Pancreas (tissue), 10 donors: ENCODE measurements at regions of chr1 and their contacts with region 1.

Region 1: GRCh38 chr1:101130673-101131072 is 105.1 kb upstream of the DPH5 start:
- DNase-seq: no peak
- ATAC-seq: no peak
- H3K4me3 ChIP-seq: no peak overlapping the region
- H3K27ac ChIP-seq: no peak overlapping the region
- H3K4me1 ChIP-seq: no peaks in the 10 kb centered on the region
- H3K27me3 ChIP-seq: no peaks in the 10 kb centered on the region
- CTCF ChIP-seq: no peak

Region 2: DNA sequence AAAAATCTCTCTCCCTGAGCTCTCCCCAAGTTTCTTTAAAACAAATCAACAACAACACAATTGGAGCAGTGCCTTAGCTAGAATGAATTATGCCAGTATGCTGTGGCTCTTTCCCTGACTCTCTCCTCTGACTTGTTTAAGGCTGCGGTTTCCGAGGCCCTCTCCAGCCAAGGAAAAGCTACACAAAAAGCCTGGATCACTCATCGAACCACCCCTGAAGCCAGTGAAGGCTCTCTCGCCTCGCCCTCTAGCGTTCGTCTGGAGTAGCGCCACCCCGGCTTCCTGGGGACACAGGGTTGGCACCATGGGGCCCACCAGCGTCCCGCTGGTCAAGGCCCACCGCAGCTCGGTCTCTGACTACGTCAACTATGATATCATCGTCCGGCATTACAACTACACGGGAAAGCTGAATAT is 108.0 kb after region 1 on chr1:
- intact Hi-C with region 1: loop called in 1 of 3 experiments (anchors 5 kb)
- DNase-seq: peak; percentile 50 to 93 (median 76)
- ATAC-seq: peak; percentile 77 to 87 (median 82)
- H3K4me3 ChIP-seq: no peak overlapping the region
- H3K27ac ChIP-seq: no peak overlapping the region
- H3K4me1 ChIP-seq: peaks cover 4 to 14% (median 8%) of the 10 kb centered on the region in 3 donors
- H3K27me3 ChIP-seq: peaks cover 0 to 34% (median 0%) of the 10 kb centered on the region in 4 donors
- CTCF ChIP-seq: peak; percentile 80 to 92 (median 88)